ENCODE measurements at regions of chr19 and their contacts with region 1.

Region 1: GRCh38 chr19:23395041-23395721 is at the start of gene ZNF91:
- DNase-seq: peak; percentile 94 to 98
- H3K4me3 ChIP-seq: peak within 1 kb of the TSS; percentile 90 to 92
- H3K27ac ChIP-seq: peak within 1 kb of the TSS; percentile 95 to 96
- H3K4me1 ChIP-seq: peaks cover 10 to 12% of the 10 kb centered on the region in 2 donors
- H3K27me3 ChIP-seq: no peaks in the 10 kb centered on the region
- CTCF ChIP-seq: no peak
- total RNA-seq, gene ZNF91: 28.5 TPM

Region 2: DNA sequence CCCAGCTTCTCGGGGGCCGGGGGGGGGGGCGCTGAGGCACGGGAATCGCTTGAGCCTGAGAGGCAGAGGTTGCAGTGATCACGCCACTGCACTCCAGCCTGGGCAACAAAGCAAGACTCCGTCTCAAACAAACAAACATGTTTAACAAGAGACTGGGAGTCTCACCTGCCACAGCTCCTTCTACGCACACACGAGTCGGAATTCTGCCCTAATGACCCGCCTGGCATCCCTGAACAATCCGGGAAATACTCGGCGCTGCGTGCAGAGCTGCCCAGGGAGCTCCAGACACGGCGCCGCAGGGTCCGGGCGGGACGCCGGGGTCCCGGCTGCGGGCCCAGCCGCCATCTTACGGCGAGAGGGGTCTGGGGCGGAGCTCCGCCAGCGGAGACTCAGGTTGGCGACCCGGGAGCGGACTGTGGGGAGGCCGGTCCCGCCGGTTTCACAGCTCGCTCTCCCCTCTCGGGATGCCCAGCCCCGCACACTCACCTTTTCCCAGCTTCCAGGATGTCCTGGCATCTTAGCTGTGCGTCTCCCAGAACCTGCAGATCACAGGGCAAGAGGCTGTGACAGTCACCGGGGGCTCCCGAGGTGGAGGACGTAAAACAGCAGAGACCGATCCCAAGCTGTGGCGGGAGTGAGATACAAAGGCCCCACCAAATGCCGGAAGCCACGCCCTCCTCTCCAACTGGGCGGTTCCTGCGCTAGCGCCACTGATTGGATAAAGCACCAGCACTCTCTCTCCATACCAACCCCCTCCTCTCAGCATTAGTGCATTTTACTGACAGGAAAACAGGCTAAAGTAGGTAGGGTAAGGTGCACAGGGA is 121.4 kb before region 1 on chr19:
- intact Hi-C with region 1: loop called (anchors 2 kb)
- DNase-seq: peak; percentile 88 to 97
- H3K4me3 ChIP-seq: peak overlapping the region; percentile 94 to 99
- H3K27ac ChIP-seq: peak overlapping the region; percentile 91
- H3K4me1 ChIP-seq: peaks cover 3 to 6% of the 10 kb centered on the region in 2 donors
- H3K27me3 ChIP-seq: no peaks in the 10 kb centered on the region
- CTCF ChIP-seq: no peak

Region 3: GRCh38 chr19:23539499-23539898 is 144.3 kb after region 1 on chr19:
- intact Hi-C with region 1: no loop called
- DNase-seq: no peak
- H3K4me3 ChIP-seq: no peak overlapping the region
- H3K27ac ChIP-seq: no peak overlapping the region
- H3K4me1 ChIP-seq: no peaks in the 10 kb centered on the region
- H3K27me3 ChIP-seq: no peaks in the 10 kb centered on the region
- CTCF ChIP-seq: no peak

Region 4: GRCh38 chr19:23758187-23759074 is 363.2 kb after region 1 on chr19 and contains the start of gene ZNF681:
- intact Hi-C with region 1: loop called (anchors 10 kb)
- DNase-seq: peak; percentile 71 to 93
- H3K4me3 ChIP-seq: peak within 1 kb of the TSS; percentile 52 to 86
- H3K27ac ChIP-seq: peak within 1 kb of the TSS; percentile 71 to 77
- H3K4me1 ChIP-seq: peaks cover 0 to 5% of the 10 kb centered on the region in 2 donors
- H3K27me3 ChIP-seq: no peaks in the 10 kb centered on the region
- CTCF ChIP-seq: peak in 1 of 3 experiments; percentile 17
- total RNA-seq, gene ZNF681: 1.9 TPM

Region 5: GRCh38 chr19:24033301-24033962 is 638.3 kb after region 1 on chr19:
- intact Hi-C with region 1: loop called (anchors 10 kb)
- DNase-seq: peak; percentile 67 to 93
- H3K4me3 ChIP-seq: peak overlapping the region; percentile 88 to 90
- H3K27ac ChIP-seq: peak overlapping the region; percentile 93 to 96
- H3K4me1 ChIP-seq: peaks cover 4 to 10% of the 10 kb centered on the region in 2 donors
- H3K27me3 ChIP-seq: no peaks in the 10 kb centered on the region
- CTCF ChIP-seq: no peak